Posterior vena cava (tissue), 2 donors: ENCODE measurements at regions of chr10 and their contacts with region 1.

Region 1: DNA sequence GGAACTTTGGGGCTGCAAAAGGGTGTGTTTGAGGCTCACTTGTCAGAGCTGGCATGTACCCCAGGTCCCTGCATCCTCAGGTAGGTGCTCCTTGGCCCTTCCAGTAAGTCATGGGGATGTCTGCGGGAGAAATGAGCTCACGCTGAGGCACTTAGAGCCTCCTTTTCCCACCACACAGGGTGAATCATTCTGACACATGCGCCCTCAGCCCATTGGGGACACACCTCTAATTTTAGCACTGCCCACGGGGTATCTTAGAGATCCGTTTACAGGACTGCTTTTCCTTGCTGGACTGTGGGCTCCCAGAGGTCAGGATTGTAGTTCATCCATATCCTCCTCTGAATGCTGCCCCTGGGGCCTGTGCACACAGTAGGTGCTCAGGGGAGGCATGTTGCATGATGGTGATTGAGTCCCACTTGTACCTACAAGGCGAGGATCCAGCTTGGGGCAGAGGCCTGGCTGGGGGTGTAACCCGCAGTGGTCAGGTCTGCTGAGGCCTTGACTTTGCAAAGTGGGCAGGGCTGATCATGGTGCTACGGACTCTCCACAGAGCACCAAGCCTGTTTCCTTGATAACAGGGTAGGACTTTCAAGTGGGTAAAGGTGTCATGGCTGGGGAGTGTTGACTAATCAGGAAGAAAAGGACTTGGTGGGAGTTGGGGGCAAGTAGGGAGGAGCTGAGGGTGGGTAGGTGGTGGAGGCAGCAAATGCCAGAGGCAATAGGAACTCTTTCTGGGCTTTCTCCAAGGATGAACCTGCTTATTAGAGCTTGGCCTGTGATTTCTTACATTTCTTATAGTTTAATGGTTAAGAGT is 5.8 kb downstream of the TSPAN15 start:
- DNase-seq: no peak

Region 2: GRCh38 chr10:69474742-69475432 is 17.8 kb after region 1 on chr10:
- intact Hi-C with region 1: loop called in 1 of 2 experiments (anchors 2 kb)
- DNase-seq: peak; percentile 90